ENCODE measurements at regions of chr17 and their contacts with region 1.

Region 1: DNA sequence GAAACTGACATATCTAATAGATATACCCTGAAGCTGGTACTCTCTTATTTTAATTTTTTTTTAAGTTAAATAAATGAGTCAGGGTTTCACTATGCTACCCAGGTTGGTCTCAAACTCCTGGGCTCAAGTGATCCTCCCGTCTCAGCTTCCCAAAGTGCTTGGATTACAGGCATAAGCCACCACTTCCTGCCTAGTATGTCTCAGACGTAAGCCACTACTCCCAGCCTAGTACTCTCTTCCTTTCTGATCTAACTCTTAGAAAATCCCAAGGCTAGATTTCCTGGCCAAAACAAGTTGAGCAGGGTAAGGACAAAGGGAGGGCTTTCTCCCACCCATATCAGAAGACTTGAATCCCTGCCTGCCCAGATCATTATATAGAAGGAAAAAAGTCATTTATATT is 33.7 kb downstream of the HOXB1 start:
- DNase-seq: no peak
- H3K4me3 ChIP-seq: no peak overlapping the region
- H3K27ac ChIP-seq: no peak overlapping the region
- H3K4me1 ChIP-seq: peaks cover 12% of the 10 kb centered on the region
- H3K27me3 ChIP-seq: no peaks in the 10 kb centered on the region
- CTCF ChIP-seq: no peak
- POLR2A ChIP-seq: no peak

Region 2: GRCh38 chr17:48519427-48519826 is 22.3 kb after region 1 on chr17:
- intact Hi-C with region 1: loop called (anchors 1 kb)
- DNase-seq: no peak
- H3K4me3 ChIP-seq: no peak overlapping the region
- H3K27ac ChIP-seq: no peak overlapping the region
- H3K4me1 ChIP-seq: no peaks in the 10 kb centered on the region
- H3K27me3 ChIP-seq: no peaks in the 10 kb centered on the region
- CTCF ChIP-seq: no peak
- POLR2A ChIP-seq: no peak